Heart left ventricle (tissue), 16 donors: ENCODE measurements at regions of chr20 and their contacts with region 1.

Region 1: GRCh38 chr20:58078741-58079522 is 149.5 kb downstream of the ANKRD60 start:
- DNase-seq: peak in 2 of 5 donors; percentile 27 to 28
- ATAC-seq: peak in 3 of 4 donors; percentile 38 to 75 (median 54)
- H3K4me3 ChIP-seq: no peak overlapping the region
- H3K27ac ChIP-seq: peak overlapping the region in 6 of 12 donors; percentile 13 to 66 (median 31)
- H3K4me1 ChIP-seq: peaks cover 0 to 28% (median 12%) of the 10 kb centered on the region in 12 donors
- H3K27me3 ChIP-seq: peaks cover 0 to 10% (median 0%) of the 10 kb centered on the region in 9 donors
- CTCF ChIP-seq: no peak
- POLR2A ChIP-seq: no peak

Region 2: DNA sequence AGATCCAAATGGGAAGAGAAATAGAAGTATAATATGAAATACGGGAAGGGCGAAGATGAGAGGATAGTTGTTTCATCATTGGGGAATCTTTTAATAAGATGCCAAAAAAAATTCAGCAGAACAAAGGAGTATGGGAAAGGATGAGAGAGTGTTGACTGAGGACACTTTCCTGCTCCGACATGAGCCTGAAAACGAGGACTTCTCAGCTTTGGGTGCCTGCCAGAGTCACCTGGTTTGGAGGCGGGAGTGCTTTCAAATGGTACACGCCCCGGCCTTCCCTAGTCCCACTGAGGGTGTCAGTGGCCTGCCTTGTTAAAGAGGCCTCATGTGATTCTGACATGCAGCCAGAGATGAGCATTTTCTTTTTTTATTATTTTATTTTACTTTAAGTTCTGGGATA is 101.4 kb before region 1 on chr20:
- intact Hi-C with region 1: no loop called
- DNase-seq: no peak
- ATAC-seq: peak in 2 of 4 donors; percentile 35 to 38
- H3K4me3 ChIP-seq: no peak overlapping the region
- H3K27ac ChIP-seq: peak overlapping the region in 7 of 12 donors; percentile 6 to 60 (median 42)
- H3K4me1 ChIP-seq: peaks cover 0 to 25% (median 0%) of the 10 kb centered on the region in 12 donors
- H3K27me3 ChIP-seq: no peaks in the 10 kb centered on the region
- CTCF ChIP-seq: no peak
- POLR2A ChIP-seq: no peak

Region 3: DNA sequence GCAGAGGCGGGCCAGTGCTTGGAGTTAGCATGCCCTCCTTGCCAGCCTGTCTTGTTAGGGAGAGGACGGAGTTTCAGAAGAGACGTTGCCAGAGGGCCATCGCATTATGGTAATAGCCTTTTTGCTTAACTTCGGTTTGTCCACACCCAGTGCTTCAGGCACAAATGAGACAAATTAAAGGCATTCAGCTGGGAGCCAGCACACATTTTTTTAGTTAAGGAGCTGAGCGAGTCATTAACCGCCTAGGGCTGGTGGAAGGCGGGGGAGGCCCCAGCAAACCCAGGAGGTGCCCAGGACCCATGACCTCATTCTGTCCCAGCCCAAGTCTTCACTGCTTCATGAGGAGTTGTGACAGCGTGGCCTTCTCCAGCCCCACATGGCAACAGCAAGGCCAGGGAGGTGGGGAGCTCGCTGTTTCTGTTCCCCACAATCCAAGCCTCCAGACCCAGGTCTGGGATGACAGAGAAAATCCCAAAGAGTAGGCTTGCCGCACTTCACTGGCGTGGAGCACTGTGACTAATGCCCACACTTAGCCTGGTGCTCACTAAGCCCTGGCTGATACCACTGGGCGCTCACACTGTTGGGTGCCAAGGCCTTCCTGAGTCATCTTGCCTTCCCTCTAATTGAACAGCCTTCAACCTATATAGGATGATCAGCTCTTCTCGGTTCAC is 87.6 kb before region 1 on chr20:
- intact Hi-C with region 1: loop called in 3 of 10 experiments (anchors 5 to 10 kb)
- DNase-seq: peak in 1 of 5 donors; percentile 46
- ATAC-seq: peak in 2 of 4 donors; percentile 52 to 61
- H3K4me3 ChIP-seq: no peak overlapping the region
- H3K27ac ChIP-seq: peak overlapping the region in 1 of 12 donors; percentile 26
- H3K4me1 ChIP-seq: peaks cover 0 to 26% (median 6%) of the 10 kb centered on the region in 12 donors
- H3K27me3 ChIP-seq: no peaks in the 10 kb centered on the region
- CTCF ChIP-seq: no peak
- POLR2A ChIP-seq: no peak

Region 4: DNA sequence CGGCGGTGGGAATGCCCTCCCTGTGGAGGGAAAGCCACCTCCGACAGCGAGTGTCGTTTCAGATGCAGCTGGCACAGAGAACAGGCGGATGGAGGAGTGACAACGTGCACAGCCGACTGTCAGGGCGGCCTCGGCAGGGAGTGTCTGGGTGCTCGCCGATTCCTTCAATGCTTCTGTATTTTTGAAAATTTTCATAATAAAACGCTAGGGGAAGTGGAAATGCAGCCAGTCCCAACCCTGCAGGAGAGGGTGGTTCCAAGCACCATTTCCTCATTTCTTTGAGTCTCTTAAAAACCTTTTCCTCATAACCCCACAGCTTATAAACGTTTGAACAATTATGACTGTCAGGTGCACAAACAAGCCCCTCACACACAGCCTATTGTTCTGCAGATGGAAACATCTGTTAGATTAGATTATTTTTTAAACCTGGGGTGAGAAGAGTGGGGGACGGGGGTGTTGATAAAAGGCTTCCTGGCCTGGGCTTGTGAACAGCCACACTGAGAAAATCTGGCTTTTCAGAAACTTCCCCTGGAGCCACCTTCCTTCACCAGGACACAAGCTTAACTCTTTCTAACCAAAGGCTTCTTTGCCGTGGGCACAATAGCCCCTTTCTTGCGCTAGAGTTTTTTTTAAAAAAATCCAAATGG is 79.3 kb before region 1 on chr20:
- intact Hi-C with region 1: loop called in 3 of 10 experiments (anchors 5 to 10 kb)
- DNase-seq: peak in 3 of 5 donors; percentile 40 to 65 (median 45)
- ATAC-seq: peak in 3 of 4 donors; percentile 18 to 82 (median 65)
- H3K4me3 ChIP-seq: peak overlapping the region in 6 of 12 donors; percentile 11 to 37 (median 22)
- H3K27ac ChIP-seq: peak overlapping the region in 10 of 12 donors; percentile 0 to 79 (median 48)
- H3K4me1 ChIP-seq: peaks cover 0 to 64% (median 24%) of the 10 kb centered on the region in 12 donors
- H3K27me3 ChIP-seq: no peaks in the 10 kb centered on the region
- CTCF ChIP-seq: no peak
- POLR2A ChIP-seq: no peak